Natural killer cell (primary cell): ENCODE measurements at regions of chr6 and their contacts with region 1.

Region 1: GRCh38 chr6:125779924-125780539 is 10.7 kb upstream of the NCOA7 start:
- DNase-seq: peak; percentile 85 to 93
- ATAC-seq: peak; percentile 80 to 92 (median 80)
- H3K4me3 ChIP-seq: peak overlapping the region; percentile 85
- H3K4me3 Mint-ChIP-seq: no peak overlapping the region
- H3K27ac ChIP-seq: peak overlapping the region; percentile 89
- H3K27ac Mint-ChIP-seq: no peak overlapping the region
- H3K4me1 ChIP-seq: no peaks in the 10 kb centered on the region
- H3K4me1 Mint-ChIP-seq: peaks cover 5 to 7% of the 10 kb centered on the region in 2 donors
- H3K27me3 ChIP-seq: no peaks in the 10 kb centered on the region
- H3K27me3 Mint-ChIP-seq: peaks cover 0 to 7% of the 10 kb centered on the region in 2 donors
- CTCF ChIP-seq: peak; percentile 22

Region 2: DNA sequence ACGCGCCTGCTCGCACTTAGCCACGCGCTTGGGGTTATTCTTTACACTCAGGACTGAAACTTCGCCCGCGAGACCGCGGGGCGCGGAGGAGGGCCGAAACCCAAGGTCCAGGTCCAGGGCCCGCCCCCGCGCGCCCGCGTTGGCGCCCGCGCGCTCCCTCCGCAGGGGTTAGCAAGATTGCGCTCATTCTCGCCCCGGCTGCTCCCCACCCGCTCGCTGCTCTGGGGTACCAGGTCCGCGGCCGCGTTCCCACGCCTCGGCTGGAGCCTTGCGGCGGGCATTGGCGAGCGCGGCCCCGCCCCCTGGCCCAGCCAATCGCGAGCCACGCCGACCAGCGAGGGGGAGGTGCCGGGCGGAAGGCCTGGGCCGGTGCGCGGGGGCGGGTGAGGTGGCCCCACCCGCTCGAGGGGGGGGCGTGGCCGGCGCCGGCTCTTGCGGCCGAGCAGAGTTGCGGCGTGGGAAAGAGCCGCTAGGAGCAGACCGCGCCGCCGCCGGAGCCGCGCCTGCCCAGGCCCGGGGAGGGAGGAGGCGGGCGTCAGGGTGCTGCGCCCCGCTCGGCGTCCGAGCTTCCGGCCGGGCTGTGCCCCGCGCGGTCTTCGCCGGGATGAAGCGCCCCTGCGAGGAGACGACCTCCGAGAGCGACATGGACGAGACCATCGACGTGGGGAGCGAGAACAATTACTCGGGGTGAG is 30.7 kb before region 1 on chr6 and contains the start of gene HEY2:
- intact Hi-C with region 1: loop called (anchors 1 kb)
- DNase-seq: peak; percentile 85 to 89
- ATAC-seq: peak; percentile 81 to 93 (median 85)
- H3K4me3 ChIP-seq: peak within 1 kb of the TSS; percentile 76
- H3K4me3 Mint-ChIP-seq: peak within 1 kb of the TSS; percentile 94
- H3K27ac ChIP-seq: peak within 1 kb of the TSS; percentile 34
- H3K27ac Mint-ChIP-seq: peak within 1 kb of the TSS; percentile 83 to 89
- H3K4me1 ChIP-seq: peaks cover 29% of the 10 kb centered on the region
- H3K4me1 Mint-ChIP-seq: peaks cover 32 to 35% of the 10 kb centered on the region in 2 donors
- H3K27me3 ChIP-seq: peaks cover 52% of the 10 kb centered on the region
- H3K27me3 Mint-ChIP-seq: peaks cover 13 to 24% of the 10 kb centered on the region in 2 donors
- CTCF ChIP-seq: no peak
- total RNA-seq, gene HEY2: 0.66 to 0.93 (median 0.73) TPM

Region 3: DNA sequence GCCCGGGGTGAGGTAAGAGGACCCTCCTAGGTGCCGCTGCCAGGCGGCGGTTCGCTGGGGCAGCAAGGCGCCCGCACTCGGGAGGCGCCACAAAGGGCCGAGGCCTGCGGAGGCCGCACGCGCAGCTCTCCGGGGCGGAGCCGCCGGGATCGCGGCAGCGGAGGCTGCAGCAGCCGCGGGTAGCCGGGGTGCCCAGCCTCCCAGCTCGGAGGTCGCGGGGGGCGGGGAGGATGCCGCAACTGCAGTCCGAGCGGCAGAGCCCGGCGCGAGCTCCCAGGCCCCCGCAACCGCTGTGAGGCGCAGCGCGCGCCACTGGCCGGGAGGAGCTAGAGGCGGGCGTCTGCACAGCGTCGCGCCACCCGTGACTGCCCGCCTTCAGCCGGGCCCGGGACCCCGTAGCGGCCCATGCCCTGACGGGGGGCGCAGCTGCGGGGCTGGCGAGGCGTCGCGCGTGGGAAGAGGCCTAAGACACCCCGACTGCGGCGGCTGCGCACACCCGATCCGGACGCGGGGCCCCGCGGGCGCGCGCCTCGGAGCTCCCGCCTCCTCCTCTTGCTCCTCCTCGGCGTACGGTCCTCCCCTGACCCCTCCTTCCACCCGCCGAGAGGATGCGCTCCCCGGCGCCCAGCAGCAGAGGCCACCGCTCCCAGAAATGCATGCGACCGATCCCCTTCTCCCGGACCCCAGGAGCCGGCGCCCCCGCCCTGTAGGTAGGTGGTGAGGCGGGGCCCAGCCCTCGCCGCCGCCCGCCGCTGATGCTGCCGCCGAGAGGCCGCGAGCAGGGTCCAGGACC is 10.5 kb after region 1 on chr6 and contains the start of gene NCOA7:
- intact Hi-C with region 1: loop called (anchors 1 kb)
- DNase-seq: peak; percentile 79 to 89
- ATAC-seq: peak; percentile 83 to 92 (median 85)
- H3K4me3 ChIP-seq: peak within 1 kb of the TSS; percentile 78
- H3K4me3 Mint-ChIP-seq: peak within 1 kb of the TSS; percentile 97
- H3K27ac ChIP-seq: peak within 1 kb of the TSS; percentile 92
- H3K27ac Mint-ChIP-seq: peak within 1 kb of the TSS; percentile 93 to 98
- H3K4me1 ChIP-seq: peaks cover 18% of the 10 kb centered on the region
- H3K4me1 Mint-ChIP-seq: peaks cover 40 to 42% of the 10 kb centered on the region in 2 donors
- H3K27me3 ChIP-seq: no peaks in the 10 kb centered on the region
- H3K27me3 Mint-ChIP-seq: no peaks in the 10 kb centered on the region
- CTCF ChIP-seq: no peak
- total RNA-seq, gene NCOA7: 37.3 to 66.6 (median 56.8) TPM

Region 4: DNA sequence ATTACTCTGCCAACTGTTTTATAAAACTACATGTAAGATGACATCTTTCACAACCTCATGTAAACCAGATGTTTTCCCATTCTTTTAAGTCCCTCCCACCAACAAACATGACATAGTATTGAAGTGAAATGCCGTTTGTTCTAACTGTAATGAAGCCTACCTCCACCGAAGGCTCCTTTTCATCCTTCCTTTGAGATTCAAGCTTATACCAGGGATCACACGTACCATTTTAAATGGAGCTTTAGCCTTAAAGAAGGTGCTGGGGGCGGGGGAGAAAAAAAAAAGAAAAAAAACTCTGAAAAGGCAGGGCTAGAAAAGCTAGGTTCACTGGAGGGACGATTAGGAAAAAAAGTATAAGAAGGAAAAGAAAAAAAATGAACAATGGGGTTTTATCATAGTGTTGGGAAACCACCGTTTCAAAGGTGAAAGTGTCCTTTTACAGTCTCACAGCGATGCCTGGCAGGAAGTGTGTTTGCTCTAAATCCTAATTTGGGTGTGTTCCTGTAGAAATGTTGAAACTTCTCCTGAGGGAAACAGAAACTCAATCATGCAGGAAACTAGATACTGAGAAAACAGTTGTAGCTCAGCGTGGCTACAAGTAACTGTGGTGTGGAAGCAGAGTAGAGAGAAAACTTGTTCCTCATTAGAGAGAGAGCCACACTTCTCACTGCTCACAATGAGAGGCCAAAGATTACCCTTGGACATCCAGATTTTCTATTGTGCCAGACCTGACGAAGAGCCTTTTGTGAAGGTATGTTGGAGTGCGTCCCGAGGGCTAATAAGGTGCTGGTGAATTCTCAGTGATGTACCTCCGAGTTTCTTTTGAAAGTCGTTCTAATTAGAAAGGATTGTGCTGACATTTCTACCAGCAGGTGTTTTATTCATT is 138.9 kb after region 1 on chr6:
- intact Hi-C with region 1: loop called (anchors 2 kb)
- DNase-seq: peak in 1 of 2 donors; percentile 83
- ATAC-seq: peak; percentile 88 to 95 (median 94)
- H3K4me3 ChIP-seq: no peak overlapping the region
- H3K4me3 Mint-ChIP-seq: peak overlapping the region; percentile 19
- H3K27ac ChIP-seq: peak overlapping the region; percentile 57
- H3K27ac Mint-ChIP-seq: peak overlapping the region; percentile 87 to 88
- H3K4me1 ChIP-seq: no peaks in the 10 kb centered on the region
- H3K4me1 Mint-ChIP-seq: peaks cover 19 to 24% of the 10 kb centered on the region in 2 donors
- H3K27me3 ChIP-seq: no peaks in the 10 kb centered on the region
- H3K27me3 Mint-ChIP-seq: no peaks in the 10 kb centered on the region
- CTCF ChIP-seq: no peak

Region 5: DNA sequence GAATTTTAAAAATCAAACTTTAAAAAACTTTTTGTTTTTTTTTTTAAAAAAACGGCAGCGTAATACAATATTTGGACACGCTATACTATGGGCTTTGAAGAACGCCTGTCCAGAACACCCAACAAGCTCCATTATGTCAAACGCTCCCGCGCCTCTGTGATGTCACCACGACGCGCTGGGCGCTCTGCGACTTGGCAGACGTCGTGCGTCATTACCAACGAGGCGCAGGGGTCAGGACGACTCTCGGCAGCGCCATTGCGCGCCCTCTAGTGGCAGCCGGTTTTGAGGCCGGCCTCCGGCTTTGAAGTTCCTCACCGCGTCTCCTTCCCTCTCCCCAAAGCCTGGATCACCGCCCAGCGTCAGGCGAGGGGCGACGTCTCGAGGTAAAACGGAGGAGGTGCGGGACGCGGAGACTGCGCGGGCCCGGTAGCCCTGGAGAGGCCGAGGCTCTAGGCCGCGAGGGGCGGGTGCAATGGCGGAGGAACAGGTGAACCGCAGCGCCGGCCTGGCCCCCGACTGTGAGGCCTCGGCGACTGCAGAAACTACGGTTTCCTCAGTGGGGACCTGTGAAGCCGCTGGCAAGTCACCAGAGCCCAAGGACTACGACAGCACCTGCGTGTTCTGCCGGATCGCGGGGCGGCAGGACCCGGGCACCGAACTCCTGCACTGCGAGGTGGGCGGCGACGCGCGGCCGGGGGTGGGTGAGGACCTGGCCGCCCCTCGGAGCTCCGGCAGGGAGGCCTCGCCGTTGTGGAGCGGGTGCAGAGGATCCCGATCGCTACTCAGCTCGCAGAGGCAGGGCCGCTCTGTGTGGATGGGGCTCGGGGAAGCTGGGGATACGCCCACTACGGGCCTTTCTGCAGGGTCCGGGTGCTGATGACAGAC is 176.7 kb after region 1 on chr6 and contains the start of gene HINT3:
- intact Hi-C with region 1: loop called (anchors 1 kb)
- DNase-seq: peak; percentile 96 to 99
- ATAC-seq: peak; percentile 89 to 98 (median 90)
- H3K4me3 ChIP-seq: peak within 1 kb of the TSS; percentile 99
- H3K4me3 Mint-ChIP-seq: no peak within 1 kb of the TSS
- H3K27ac ChIP-seq: peak within 1 kb of the TSS; percentile 100
- H3K27ac Mint-ChIP-seq: no peak within 1 kb of the TSS
- H3K4me1 ChIP-seq: peaks cover 8% of the 10 kb centered on the region
- H3K4me1 Mint-ChIP-seq: peaks cover 0 to 4% of the 10 kb centered on the region in 2 donors
- H3K27me3 ChIP-seq: no peaks in the 10 kb centered on the region
- H3K27me3 Mint-ChIP-seq: peaks cover 0 to 3% of the 10 kb centered on the region in 2 donors
- CTCF ChIP-seq: peak; percentile 98
- total RNA-seq, gene HINT3: 9.7 to 10.5 (median 10.3) TPM

Region 6: GRCh38 chr6:127266178-127266891 is 1486.3 kb after region 1 on chr6 and contains the start of gene RNF146:
- intact Hi-C with region 1: loop called (anchors 10 kb)
- DNase-seq: peak; percentile 78 to 85
- ATAC-seq: peak; percentile 75 to 88 (median 83)
- H3K4me3 ChIP-seq: peak within 1 kb of the TSS; percentile 95
- H3K4me3 Mint-ChIP-seq: peak within 1 kb of the TSS; percentile 99
- H3K27ac ChIP-seq: peak within 1 kb of the TSS; percentile 98
- H3K27ac Mint-ChIP-seq: peak within 1 kb of the TSS; percentile 96
- H3K4me1 ChIP-seq: no peaks in the 10 kb centered on the region
- H3K4me1 Mint-ChIP-seq: peaks cover 34 to 42% of the 10 kb centered on the region in 2 donors
- H3K27me3 ChIP-seq: no peaks in the 10 kb centered on the region
- H3K27me3 Mint-ChIP-seq: peaks cover 0 to 4% of the 10 kb centered on the region in 2 donors
- CTCF ChIP-seq: peak; percentile 69
- total RNA-seq, gene RNF146: 23.0 to 34.8 (median 25.4) TPM